ENCODE measurements at regions of chr1 and their contacts with region 1.

Region 1: GRCh38 chr1:234722904-234723720 is 113.1 kb upstream of the IRF2BP2 start:
- DNase-seq: peak; percentile 72
- H3K4me3 Mint-ChIP-seq: peak overlapping the region; percentile 27
- H3K27ac Mint-ChIP-seq: peak overlapping the region; percentile 85
- H3K4me1 Mint-ChIP-seq: peaks cover 98% of the 10 kb centered on the region
- H3K27me3 Mint-ChIP-seq: no peaks in the 10 kb centered on the region
- CTCF ChIP-seq: no peak

Region 2: DNA sequence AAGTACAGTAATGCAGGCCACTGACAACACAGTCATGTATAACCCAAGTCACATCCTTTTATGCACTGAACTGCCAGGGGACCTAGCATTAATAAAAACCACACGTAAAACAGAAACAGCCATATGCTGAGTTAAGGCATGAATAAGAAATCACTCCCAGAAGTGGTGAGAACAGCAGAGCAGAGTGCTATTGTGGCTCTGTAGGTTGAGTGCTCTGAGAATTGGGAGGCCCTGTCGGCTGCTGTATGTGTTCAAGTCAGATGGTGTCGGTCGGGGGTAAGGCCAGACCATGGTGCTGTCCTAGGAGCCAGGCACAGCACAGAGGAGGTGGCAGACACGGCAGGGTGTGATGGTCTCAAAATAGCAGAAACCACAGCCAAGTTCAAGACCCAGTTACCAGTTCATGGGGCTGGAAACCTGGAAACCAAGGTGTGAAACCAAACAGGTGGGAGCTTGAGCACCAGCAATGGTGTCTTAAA is 476.4 kb before region 1 on chr1:
- CTCF ChIA-PET with region 1: no interaction called
- intact Hi-C with region 1: no loop called
- DNase-seq: no peak
- H3K4me3 Mint-ChIP-seq: no peak overlapping the region
- H3K27ac Mint-ChIP-seq: no peak overlapping the region
- H3K4me1 Mint-ChIP-seq: no peaks in the 10 kb centered on the region
- H3K27me3 Mint-ChIP-seq: peaks cover 36% of the 10 kb centered on the region
- CTCF ChIP-seq: no peak

Region 3: DNA sequence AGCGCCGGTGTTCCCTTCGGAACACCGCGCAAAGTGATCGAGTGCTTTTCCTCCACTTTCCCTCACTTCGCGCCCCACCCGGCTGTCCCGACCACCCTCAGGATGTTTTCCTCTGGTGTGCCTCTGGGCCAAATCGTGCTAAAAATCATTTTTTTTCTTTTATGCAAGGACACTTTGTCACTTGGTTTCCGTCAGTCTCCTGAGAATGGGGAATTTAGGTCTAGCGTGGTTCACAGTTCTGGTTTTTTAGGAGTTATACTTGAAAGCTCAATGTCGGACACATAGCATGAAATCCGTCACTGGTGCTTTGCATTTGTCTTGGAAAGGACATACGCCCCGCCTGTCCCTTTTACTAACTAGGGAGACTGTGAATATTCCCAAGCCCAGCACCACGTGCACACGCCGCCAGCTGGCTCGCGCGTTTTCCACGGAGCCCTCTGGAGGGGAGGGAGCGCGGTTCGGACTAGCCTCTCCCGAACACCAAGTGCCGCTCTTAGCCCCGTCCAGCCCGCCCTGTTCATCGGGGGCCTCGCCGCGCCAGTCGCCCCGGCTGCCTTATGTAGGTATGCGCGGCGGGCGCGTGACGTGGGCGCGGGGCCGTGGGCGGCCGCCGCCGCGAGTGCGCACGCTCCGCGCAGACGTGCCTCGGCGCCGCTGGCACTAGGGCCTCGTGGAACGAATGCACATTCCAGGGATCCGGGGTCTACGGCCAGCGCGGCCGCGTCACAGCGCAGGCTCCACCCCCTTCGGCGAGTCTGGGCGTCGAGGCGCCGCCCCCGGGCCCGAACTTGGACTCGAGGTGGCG is 112.6 kb before region 1 on chr1:
- CTCF ChIA-PET with region 1: interaction called, 39 read pairs
- intact Hi-C with region 1: loop called (anchors 1 kb)
- DNase-seq: peak; percentile 96
- H3K4me3 Mint-ChIP-seq: peak overlapping the region; percentile 89
- H3K27ac Mint-ChIP-seq: peak overlapping the region; percentile 97
- H3K4me1 Mint-ChIP-seq: peaks cover 53% of the 10 kb centered on the region
- H3K27me3 Mint-ChIP-seq: no peaks in the 10 kb centered on the region
- CTCF ChIP-seq: no peak

Region 4: GRCh38 chr1:234656856-234657654 is 66.1 kb before region 1 on chr1:
- CTCF ChIA-PET with region 1: interaction called, 10 read pairs
- intact Hi-C with region 1: no loop called
- DNase-seq: peak; percentile 51
- H3K4me3 Mint-ChIP-seq: peak overlapping the region; percentile 1
- H3K27ac Mint-ChIP-seq: peak overlapping the region; percentile 40
- H3K4me1 Mint-ChIP-seq: peaks cover 56% of the 10 kb centered on the region
- H3K27me3 Mint-ChIP-seq: no peaks in the 10 kb centered on the region
- CTCF ChIP-seq: peak; percentile 7

Region 5: DNA sequence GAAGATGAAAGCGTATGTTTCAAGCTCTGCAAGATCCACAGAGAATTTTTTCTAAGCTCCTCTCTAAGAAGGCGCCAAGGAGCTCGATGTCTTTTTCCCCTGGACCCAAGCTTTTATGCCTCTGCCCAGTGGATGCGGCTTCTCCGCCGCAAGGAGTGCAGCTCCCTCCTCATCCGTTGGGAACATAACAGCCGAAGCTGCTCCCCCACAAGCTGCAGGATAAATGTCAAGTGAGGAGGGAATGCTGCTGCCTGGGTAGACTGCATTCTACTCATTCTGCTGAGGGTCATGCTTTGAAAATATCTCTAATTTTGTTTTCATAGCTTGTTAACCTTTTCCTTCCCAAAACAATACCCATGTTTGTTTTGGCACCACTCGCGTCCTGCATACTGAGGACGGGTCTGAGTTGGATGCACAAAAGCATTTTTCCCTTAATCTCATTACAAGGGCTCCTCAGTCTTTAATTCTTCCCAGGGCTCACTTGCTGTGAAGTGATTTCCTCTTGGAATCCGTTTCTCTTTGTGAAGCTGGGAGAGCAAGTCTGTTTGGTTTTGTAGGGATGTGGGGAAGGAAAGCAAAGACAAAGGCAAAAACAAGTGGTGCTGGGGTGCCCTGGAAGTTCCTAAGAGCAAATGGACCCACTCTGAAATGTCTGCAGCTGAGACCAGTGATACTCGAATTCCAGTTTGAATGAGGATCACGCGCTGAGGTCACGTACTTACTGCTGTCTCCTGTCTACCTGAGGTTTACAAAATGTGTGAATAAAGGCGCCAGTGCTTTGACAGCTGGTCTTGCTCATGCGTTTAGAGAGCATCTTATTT is 20.9 kb after region 1 on chr1:
- CTCF ChIA-PET with region 1: interaction called, 10 read pairs
- intact Hi-C with region 1: no loop called
- DNase-seq: no peak
- H3K4me3 Mint-ChIP-seq: no peak overlapping the region
- H3K27ac Mint-ChIP-seq: no peak overlapping the region
- H3K4me1 Mint-ChIP-seq: peaks cover 24% of the 10 kb centered on the region
- H3K27me3 Mint-ChIP-seq: no peaks in the 10 kb centered on the region
- CTCF ChIP-seq: no peak

Region 6: DNA sequence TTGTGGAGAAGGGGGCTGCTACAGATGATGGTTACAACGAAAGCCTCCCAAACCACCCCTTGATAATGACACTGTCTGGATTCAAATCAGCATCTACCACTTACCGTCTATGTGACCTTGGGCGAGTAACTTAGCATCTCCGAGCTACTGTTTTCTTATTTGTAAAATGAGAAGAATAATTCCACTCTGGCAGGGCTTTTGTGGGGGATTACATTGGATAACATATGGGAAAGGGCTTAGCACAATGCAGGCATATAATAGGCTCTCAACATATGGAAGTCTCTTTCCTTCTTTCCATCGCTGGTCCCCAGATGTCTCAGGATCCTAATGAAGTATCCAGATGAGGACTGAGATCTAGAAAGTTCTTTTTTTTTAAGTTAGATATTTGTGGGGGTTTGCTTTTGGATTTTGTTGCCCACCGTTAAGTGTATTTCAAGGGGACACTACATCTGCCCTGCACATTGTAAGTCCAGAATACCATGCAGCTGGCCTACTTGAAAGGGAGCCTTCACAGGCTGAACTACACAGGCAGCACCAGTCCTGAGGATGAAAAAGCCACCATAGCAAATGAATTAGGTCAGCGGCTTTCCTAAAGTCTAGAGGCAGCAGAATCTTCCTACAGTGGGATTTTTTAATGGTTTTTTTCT is 59.1 kb after region 1 on chr1:
- CTCF ChIA-PET with region 1: no interaction called
- intact Hi-C with region 1: no loop called
- DNase-seq: no peak
- H3K4me3 Mint-ChIP-seq: no peak overlapping the region
- H3K27ac Mint-ChIP-seq: no peak overlapping the region
- H3K4me1 Mint-ChIP-seq: no peaks in the 10 kb centered on the region
- H3K27me3 Mint-ChIP-seq: no peaks in the 10 kb centered on the region
- CTCF ChIP-seq: no peak

Region 7: GRCh38 chr1:234875953-234876855 is 153.1 kb after region 1 on chr1:
- CTCF ChIA-PET with region 1: no interaction called
- intact Hi-C with region 1: loop called (anchors 5 kb)
- DNase-seq: peak; percentile 42
- H3K4me3 Mint-ChIP-seq: no peak overlapping the region
- H3K27ac Mint-ChIP-seq: peak overlapping the region; percentile 36
- H3K4me1 Mint-ChIP-seq: peaks cover 52% of the 10 kb centered on the region
- H3K27me3 Mint-ChIP-seq: no peaks in the 10 kb centered on the region
- CTCF ChIP-seq: no peak

Region 8: DNA sequence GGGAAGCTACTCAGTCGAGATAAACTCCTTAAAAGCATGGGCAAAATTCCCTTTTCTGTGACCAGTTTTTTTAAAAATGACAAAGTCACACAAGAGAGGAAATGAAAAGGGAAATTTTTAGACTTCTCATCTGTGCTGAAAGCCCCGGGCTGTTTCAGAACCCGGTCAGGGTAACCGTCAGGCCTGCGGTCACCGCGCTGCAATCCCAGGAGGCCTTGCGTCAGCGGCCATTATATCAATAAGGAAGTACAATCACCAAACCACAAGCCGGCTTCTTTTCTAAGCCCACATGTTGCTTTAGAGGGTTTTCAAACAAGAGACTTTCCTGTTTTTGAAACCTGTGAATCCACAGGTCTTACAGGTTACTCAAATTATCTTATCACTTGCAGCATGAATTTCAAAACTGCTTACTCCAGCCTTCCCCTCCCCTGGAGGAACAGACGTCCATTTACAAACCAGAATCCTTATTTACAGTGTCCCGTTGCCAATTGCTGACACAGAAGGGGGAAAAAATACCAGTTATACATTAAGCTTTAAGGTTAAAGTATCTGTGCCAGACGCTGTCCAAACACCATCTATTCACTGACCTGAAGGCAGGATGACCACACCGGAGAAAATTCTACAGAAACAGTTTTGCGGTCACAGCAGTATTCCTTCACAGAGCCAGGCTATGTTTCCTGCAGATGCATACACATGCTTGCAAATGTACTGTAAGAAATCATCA is 240.2 kb after region 1 on chr1:
- CTCF ChIA-PET with region 1: interaction called, 11 read pairs
- intact Hi-C with region 1: loop called (anchors 1 kb)
- DNase-seq: peak; percentile 89
- H3K4me3 Mint-ChIP-seq: peak overlapping the region; percentile 15
- H3K27ac Mint-ChIP-seq: peak overlapping the region; percentile 86
- H3K4me1 Mint-ChIP-seq: peaks cover 73% of the 10 kb centered on the region
- H3K27me3 Mint-ChIP-seq: no peaks in the 10 kb centered on the region
- CTCF ChIP-seq: no peak

Region 9: DNA sequence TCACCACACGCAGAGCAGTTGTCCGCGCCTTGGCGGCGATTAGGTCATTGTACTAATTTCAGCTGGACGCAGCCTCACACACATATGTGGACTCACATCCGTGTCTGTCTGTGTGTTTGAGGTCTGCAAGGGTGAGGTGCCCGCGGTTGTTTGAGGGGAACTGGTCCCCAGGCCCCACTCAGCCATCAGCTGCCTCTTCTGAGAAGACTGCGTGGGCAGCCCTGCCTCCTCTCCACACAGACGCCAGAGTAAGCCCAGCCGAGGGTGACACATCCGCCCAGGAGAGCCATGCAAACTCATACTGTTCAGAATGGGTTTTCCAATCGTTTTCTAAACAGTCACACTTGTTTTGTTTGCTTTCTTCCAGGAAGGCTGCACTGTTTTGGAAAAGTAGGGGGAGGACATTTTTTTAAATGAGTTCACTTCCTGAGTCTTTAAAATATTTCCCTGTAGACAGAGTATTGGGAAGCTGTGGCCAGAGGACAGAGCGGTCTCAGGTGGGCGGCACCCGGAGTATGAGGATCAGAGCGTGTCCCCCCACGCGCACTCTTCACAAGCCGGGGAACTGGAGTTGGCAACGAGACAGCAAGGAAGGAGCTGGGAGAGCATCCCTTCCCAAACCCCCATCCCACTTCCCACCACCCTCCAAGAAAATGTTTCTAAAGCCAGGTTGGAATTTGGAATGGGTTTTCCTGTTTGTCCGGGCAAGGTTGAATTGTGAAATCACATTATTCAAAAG is 352.2 kb after region 1 on chr1:
- CTCF ChIA-PET with region 1: interaction called, 5 read pairs
- intact Hi-C with region 1: loop called (anchors 2 kb)
- DNase-seq: peak; percentile 73
- H3K4me3 Mint-ChIP-seq: peak overlapping the region; percentile 50
- H3K27ac Mint-ChIP-seq: peak overlapping the region; percentile 98
- H3K4me1 Mint-ChIP-seq: peaks cover 35% of the 10 kb centered on the region
- H3K27me3 Mint-ChIP-seq: no peaks in the 10 kb centered on the region
- CTCF ChIP-seq: no peak

Measured in Calu3 (cell line).